ENCODE measurements at regions of chr6 and their contacts with region 1.

Region 1: DNA sequence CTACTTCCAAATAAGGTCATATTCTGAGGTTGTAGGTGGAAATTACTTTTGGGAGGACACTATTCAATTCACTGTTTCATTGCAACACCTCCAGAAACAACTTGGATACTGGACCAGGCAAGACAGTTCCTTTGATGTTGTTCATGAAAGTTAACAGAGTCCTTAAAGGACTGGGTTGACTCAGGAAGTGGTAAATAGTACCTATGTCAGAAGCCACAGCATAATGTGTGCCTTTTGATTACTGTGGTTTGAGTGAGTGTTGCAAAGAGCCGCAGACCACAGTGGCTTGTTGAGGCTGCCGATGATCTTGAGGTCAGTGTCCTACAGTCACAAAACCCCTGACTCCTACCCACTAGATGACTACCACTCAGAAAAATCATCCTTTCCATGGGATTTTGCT is 10.9 kb downstream of the IL20RA start:
- DNase-seq: no peak
- H3K4me3 ChIP-seq: no peak overlapping the region
- H3K27ac ChIP-seq: no peak overlapping the region
- H3K4me1 ChIP-seq: no peaks in the 10 kb centered on the region
- H3K27me3 ChIP-seq: no peaks in the 10 kb centered on the region
- CTCF ChIP-seq: no peak
- POLR2A ChIP-seq: no peak

Region 2: GRCh38 chr6:136983687-136984086 is 50.1 kb before region 1 on chr6:
- CTCF ChIA-PET with region 1: no interaction called
- POLR2A ChIA-PET with region 1: interaction called, 10 read pairs
- dilution Hi-C with region 1: no loop called
- intact Hi-C with region 1: no loop called
- DNase-seq: no peak
- H3K4me3 ChIP-seq: no peak overlapping the region
- H3K27ac ChIP-seq: no peak overlapping the region
- H3K4me1 ChIP-seq: no peaks in the 10 kb centered on the region
- H3K27me3 ChIP-seq: peaks cover 6 to 14% of the 10 kb centered on the region in 2 experiments
- CTCF ChIP-seq: no peak
- POLR2A ChIP-seq: no peak

Region 3: DNA sequence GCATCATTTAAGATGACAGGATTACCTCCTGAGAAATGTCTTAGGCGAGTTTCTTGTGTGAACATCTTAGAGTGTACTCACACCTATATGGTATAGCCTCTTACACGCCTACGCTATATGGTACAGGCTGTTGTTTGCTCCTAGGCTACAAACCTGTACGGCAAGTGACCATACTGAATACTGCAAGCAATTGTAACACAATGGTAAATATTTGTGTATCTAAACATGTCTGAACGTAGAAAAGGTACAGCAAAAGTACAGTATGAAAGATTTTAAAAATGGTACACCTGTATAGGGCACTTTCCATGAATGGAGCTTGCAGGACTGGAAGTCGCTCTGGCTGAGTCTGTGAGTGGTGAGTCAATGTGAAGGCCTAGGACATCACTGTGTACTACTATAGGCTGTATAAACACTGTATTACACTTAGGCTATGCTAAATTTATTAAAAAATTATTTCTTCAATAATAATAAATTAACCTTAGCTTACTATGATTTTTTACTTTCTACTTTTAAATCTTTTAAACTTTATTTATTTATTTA is 11.5 kb after region 1 on chr6:
- CTCF ChIA-PET with region 1: no interaction called
- POLR2A ChIA-PET with region 1: no interaction called
- dilution Hi-C with region 1: no loop called
- intact Hi-C with region 1: no loop called
- DNase-seq: no peak
- H3K4me3 ChIP-seq: no peak overlapping the region
- H3K27ac ChIP-seq: no peak overlapping the region
- H3K4me1 ChIP-seq: no peaks in the 10 kb centered on the region
- H3K27me3 ChIP-seq: peaks cover 16 to 30% of the 10 kb centered on the region in 2 experiments
- CTCF ChIP-seq: no peak
- POLR2A ChIP-seq: no peak

Region 4: DNA sequence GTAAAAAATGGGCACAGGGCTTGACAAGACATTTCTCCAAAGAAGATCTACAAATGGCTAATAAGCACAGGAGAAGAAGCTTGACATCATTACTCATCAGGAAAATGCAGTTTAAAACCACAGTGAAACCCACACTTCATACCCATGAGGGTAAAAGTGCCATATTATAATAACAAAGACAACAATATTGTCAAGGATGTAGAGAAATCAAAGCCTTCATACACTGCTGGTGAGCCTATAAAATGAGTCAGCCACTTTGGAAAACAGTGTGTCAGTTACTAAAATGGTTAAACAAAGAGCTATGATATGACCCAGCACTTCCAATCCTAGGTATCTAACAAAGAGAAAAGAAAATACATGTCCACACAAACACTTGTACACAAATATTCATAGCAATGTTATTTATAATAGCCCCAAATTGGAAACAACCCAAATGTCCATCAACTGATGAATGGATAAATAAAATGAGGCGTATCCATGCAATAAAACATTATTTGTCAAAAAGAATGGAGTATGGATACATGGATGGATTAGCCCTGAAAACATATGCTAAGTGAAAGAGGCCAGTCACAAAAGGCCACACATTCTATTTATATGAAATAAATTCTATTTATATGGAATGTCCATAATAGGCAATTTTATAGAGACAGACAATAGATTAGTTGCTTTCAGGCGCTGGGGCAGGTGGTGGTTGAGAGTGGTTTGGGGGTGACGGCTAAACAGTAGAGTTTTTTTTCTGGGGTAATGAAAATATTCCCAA is 22.5 kb after region 1 on chr6:
- CTCF ChIA-PET with region 1: no interaction called
- POLR2A ChIA-PET with region 1: no interaction called
- dilution Hi-C with region 1: no loop called
- intact Hi-C with region 1: loop called (anchors 2 kb)
- DNase-seq: no peak
- H3K4me3 ChIP-seq: no peak overlapping the region
- H3K27ac ChIP-seq: no peak overlapping the region
- H3K4me1 ChIP-seq: no peaks in the 10 kb centered on the region
- H3K27me3 ChIP-seq: no peaks in the 10 kb centered on the region
- CTCF ChIP-seq: no peak
- POLR2A ChIP-seq: no peak